Dendritic cell treated with granulocyte-macrophage colony-stimulating factor and Interleukin-4, amounts not matched to agents 40 ng/mL and 50 ng/mL, for 4 days (primary cell): ENCODE measurements at regions of chr2 and their contacts with region 1.

Region 1: GRCh38 chr2:37877457-37878315 is 47.4 kb upstream of the RMDN2 start:
- H3K4me3 Mint-ChIP-seq: no peak overlapping the region
- H3K27ac Mint-ChIP-seq: no peak overlapping the region
- H3K4me1 Mint-ChIP-seq: peaks cover 33% of the 10 kb centered on the region
- H3K27me3 Mint-ChIP-seq: peaks cover 36% of the 10 kb centered on the region

Region 2: DNA sequence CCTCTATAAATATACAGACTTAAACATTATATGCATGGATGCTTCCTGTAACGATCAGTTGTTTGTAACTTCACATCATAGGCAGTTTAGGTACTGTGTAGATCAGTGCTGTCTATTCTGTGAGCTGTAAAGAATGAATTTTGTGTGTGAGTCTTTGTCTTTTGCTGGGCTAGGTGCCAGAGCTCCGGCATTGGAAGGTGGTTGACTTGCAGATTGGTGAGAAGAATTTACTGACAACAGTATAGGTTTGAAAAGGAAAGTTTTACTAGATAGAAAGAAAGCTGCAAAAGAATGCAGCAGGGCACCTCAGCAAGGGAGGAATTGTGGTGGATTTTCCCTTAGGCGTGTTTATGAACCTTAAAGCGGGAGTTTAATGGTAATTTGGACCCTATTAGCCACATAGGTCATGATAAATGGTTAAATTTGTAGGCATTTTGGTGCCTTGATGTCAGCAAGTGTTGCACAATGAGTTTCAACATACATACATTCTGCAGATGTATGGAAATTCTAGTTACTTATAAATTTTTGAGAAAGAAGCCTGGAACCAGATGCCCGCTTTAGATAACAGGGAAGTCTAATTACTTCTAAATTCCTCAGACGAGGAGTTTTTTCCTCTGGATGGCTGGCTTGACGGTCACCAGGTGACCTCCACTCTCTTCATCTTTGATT is 539.9 kb before region 1 on chr2:
- intact Hi-C with region 1: loop called (anchors 10 kb)
- H3K4me3 Mint-ChIP-seq: no peak overlapping the region
- H3K27ac Mint-ChIP-seq: no peak overlapping the region
- H3K4me1 Mint-ChIP-seq: peaks cover 32% of the 10 kb centered on the region
- H3K27me3 Mint-ChIP-seq: no peaks in the 10 kb centered on the region

Region 3: GRCh38 chr2:37389989-37390765 is 487.5 kb before region 1 on chr2:
- intact Hi-C with region 1: loop called (anchors 5 kb)
- H3K4me3 Mint-ChIP-seq: no peak overlapping the region
- H3K27ac Mint-ChIP-seq: no peak overlapping the region
- H3K4me1 Mint-ChIP-seq: no peaks in the 10 kb centered on the region
- H3K27me3 Mint-ChIP-seq: no peaks in the 10 kb centered on the region

Region 4: GRCh38 chr2:37414470-37414949 is 463.2 kb before region 1 on chr2:
- intact Hi-C with region 1: loop called (anchors 1 kb)
- H3K4me3 Mint-ChIP-seq: no peak overlapping the region
- H3K27ac Mint-ChIP-seq: no peak overlapping the region
- H3K4me1 Mint-ChIP-seq: no peaks in the 10 kb centered on the region
- H3K27me3 Mint-ChIP-seq: peaks cover 7% of the 10 kb centered on the region

Region 5: GRCh38 chr2:37672104-37672869 is 205.4 kb before region 1 on chr2:
- intact Hi-C with region 1: loop called (anchors 10 kb)
- H3K4me3 Mint-ChIP-seq: peak overlapping the region; percentile 91
- H3K27ac Mint-ChIP-seq: peak overlapping the region; percentile 89
- H3K4me1 Mint-ChIP-seq: peaks cover 39% of the 10 kb centered on the region
- H3K27me3 Mint-ChIP-seq: no peaks in the 10 kb centered on the region

Region 6: GRCh38 chr2:37688771-37689468 is 188.8 kb before region 1 on chr2:
- intact Hi-C with region 1: no loop called
- H3K4me3 Mint-ChIP-seq: no peak overlapping the region
- H3K27ac Mint-ChIP-seq: no peak overlapping the region
- H3K4me1 Mint-ChIP-seq: peaks cover 9% of the 10 kb centered on the region
- H3K27me3 Mint-ChIP-seq: no peaks in the 10 kb centered on the region

Region 7: GRCh38 chr2:37698931-37699481 is 178.7 kb before region 1 on chr2:
- intact Hi-C with region 1: no loop called
- H3K4me3 Mint-ChIP-seq: no peak overlapping the region
- H3K27ac Mint-ChIP-seq: no peak overlapping the region
- H3K4me1 Mint-ChIP-seq: no peaks in the 10 kb centered on the region
- H3K27me3 Mint-ChIP-seq: no peaks in the 10 kb centered on the region

Region 8: GRCh38 chr2:37832590-37833197 is 45.0 kb before region 1 on chr2:
- intact Hi-C with region 1: loop called (anchors 2 kb)
- H3K4me3 Mint-ChIP-seq: no peak overlapping the region
- H3K27ac Mint-ChIP-seq: no peak overlapping the region
- H3K4me1 Mint-ChIP-seq: peaks cover 66% of the 10 kb centered on the region
- H3K27me3 Mint-ChIP-seq: no peaks in the 10 kb centered on the region